ENCODE measurements at regions of chr12 and their contacts with region 1.

Region 1: GRCh38 chr12:115623764-115624334 is 653.6 kb downstream of the MED13L start:
- DNase-seq: no peak
- ATAC-seq: peak; percentile 39
- H3K4me3 ChIP-seq: no peak overlapping the region
- H3K27ac ChIP-seq: no peak overlapping the region
- H3K4me1 ChIP-seq: no peaks in the 10 kb centered on the region
- H3K27me3 ChIP-seq: no peaks in the 10 kb centered on the region

Region 2: DNA sequence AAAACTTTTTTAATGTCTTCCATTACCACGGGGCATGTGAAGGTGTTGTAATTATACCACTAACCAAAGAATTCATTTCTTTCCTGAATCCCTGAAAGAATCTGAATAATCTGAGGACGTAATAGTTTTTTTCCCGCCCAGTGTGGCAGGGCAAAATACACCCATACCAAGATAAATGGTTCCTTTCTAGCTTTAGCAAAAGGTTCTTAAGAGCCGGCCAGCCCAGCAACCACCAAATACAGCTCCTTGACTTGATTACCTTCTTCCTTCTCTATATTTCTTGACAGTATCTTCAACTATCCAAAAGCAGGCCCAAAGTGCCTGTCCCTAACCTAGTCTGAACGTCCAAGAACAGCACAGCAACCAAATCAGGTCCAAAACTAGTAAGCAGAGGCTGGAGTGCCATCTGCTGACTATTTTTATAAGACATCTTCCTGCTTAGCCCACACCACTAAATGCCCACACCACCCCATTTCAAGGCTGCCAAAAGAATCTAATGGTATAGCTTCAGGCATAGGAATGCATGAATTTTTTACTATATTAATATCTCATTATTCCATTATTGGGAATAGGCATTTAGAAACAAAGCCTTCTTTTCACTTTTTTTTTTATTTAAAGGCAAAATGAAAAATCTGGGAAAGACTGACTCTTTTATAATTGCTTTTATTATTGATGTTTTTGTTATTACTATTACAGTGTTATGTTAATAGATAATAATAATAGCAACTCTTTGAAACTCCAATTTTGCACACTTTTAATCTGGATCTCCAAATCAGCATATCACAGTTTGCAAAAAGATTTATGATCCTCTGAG is 129.3 kb after region 1 on chr12:
- intact Hi-C with region 1: loop called in 1 of 2 experiments (anchors 2 kb)
- DNase-seq: no peak
- ATAC-seq: peak; percentile 86
- H3K4me3 ChIP-seq: no peak overlapping the region
- H3K27ac ChIP-seq: no peak overlapping the region
- H3K4me1 ChIP-seq: no peaks in the 10 kb centered on the region
- H3K27me3 ChIP-seq: no peaks in the 10 kb centered on the region